ENCODE measurements at regions of chr17 and their contacts with region 1.

Region 1: GRCh38 chr17:73311781-73312641 is at the start of gene CDC42EP4:
- DNase-seq: peak; percentile 96 to 98 (median 97)
- H3K4me3 ChIP-seq: peak within 1 kb of the TSS; percentile 100
- H3K27ac ChIP-seq: peak within 1 kb of the TSS; percentile 94 to 95
- H3K4me1 ChIP-seq: peaks cover 5% of the 10 kb centered on the region
- H3K27me3 ChIP-seq: no peaks in the 10 kb centered on the region
- CTCF ChIP-seq: no peak
- EP300 ChIP-seq: no peak
- POLR2A ChIP-seq: peak; percentile 95
- total RNA-seq, gene CDC42EP4: 82.4 to 171 (median 120) TPM

Region 2: DNA sequence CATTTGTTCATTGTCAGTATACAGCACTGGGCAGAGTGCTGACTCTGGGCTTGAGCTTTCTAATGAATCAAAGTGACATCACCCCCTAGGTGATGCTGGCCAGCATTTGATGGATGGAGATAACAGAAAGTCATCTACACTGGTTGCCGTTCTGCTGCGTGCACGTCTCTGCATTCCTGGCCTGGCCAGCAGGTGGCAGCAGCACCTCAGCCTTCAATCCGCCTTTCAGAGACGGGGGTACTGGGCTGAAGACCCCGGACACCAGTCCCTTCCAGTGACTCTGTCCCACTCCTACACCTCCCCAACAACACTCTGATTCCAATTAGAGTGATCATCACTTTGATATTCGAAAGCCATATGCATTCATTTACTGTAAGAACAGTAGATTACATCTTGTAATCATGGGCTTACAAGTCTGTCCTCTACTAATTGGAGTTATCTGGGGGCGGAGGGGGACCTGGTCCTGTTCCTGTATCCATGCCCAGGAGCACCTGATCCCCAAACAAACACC is 56.3 kb before region 1 on chr17:
- intact Hi-C with region 1: loop called in 2 of 4 experiments (anchors 2 to 10 kb)
- DNase-seq: peak; percentile 37 to 77 (median 64)
- H3K4me3 ChIP-seq: no peak overlapping the region
- H3K27ac ChIP-seq: no peak overlapping the region
- H3K4me1 ChIP-seq: peaks cover 3% of the 10 kb centered on the region
- H3K27me3 ChIP-seq: no peaks in the 10 kb centered on the region
- CTCF ChIP-seq: peak; percentile 93 to 99 (median 97)
- EP300 ChIP-seq: no peak
- POLR2A ChIP-seq: no peak

Region 3: GRCh38 chr17:73261952-73262675 is 49.9 kb before region 1 on chr17:
- intact Hi-C with region 1: loop called in 2 of 4 experiments (anchors 2 to 10 kb)
- DNase-seq: peak in 3 of 5 donors; percentile 57 to 68 (median 59)
- H3K4me3 ChIP-seq: no peak overlapping the region
- H3K27ac ChIP-seq: peak overlapping the region in 1 of 2 donors; percentile 63
- H3K4me1 ChIP-seq: peaks cover 16% of the 10 kb centered on the region
- H3K27me3 ChIP-seq: no peaks in the 10 kb centered on the region
- CTCF ChIP-seq: no peak
- EP300 ChIP-seq: no peak
- POLR2A ChIP-seq: no peak

Region 4: DNA sequence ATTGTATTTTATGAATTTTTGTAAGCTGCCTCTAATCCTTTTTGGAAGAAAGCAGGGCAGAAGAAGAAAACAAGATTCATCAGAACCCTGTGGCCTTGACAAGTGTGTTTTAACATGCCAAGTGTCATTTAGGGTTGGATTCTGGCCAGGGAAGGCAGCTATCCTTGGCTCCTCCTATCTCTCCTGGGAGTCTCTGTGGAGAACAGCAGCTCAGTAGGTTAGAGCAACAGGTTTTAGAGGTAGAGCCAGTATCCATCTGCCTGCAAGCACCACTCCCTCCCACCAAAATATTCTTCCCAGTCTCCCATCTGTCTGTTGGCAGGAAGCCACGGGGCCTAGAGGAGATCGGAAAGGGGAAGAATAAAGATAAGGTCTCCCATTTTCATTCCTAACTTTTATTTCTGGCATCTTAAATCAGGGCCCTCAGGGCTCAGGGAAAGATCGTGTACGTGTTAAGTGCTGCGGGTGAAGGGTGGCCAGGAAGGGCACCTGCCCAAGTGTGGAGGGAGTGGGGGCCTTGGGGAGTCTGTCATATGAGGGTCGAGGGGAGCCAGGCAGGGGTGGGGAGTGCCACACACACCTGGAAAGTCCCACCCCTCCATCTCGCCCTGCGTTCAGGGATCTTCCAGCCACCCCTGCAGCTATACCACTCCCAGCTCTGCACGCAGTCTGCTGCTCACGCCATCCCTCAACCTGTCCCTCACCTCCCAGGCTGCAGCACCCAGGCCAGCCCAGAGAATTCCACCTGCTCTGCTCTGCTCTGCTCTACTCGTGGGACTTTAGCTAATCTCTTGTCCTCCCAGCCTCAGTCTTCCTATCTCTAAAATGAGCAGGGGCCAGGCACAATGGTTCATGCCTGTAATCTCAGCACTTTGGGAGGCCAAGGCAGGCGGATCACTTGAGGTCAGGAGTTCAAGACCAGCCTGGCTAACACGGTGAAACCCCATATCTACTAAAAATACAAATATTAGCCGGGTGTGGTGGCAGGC is 33.3 kb before region 1 on chr17:
- intact Hi-C with region 1: loop called in 1 of 4 experiments (anchors 2 kb)
- DNase-seq: peak; percentile 77 to 88 (median 83)
- H3K4me3 ChIP-seq: no peak overlapping the region
- H3K27ac ChIP-seq: peak overlapping the region; percentile 65 to 83
- H3K4me1 ChIP-seq: peaks cover 32% of the 10 kb centered on the region
- H3K27me3 ChIP-seq: no peaks in the 10 kb centered on the region
- CTCF ChIP-seq: no peak
- EP300 ChIP-seq: no peak
- POLR2A ChIP-seq: no peak

Region 5: DNA sequence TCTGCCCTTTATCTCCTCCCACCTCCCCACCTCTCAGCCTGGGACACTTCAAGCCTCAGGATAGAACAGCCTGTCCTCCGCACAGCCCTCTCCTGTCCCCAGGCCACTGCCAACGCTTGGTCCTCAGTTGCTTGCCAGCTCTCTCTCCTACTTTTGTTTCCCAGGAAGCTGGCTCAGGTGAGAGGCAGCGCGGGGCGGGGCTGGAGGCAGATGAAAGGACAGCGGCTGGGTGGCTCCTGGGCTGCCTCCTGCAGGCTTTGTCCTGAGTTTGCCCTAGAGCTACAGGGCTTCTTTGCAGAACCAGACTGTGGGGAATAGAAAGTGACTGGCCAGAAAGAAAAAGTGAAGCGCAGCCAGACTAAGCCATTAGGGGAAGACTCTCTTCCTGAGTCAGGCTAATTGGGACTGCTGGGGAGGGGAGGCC is 48.0 kb after region 1 on chr17:
- intact Hi-C with region 1: loop called in 2 of 4 experiments (anchors 5 to 10 kb)
- DNase-seq: no peak
- H3K4me3 ChIP-seq: no peak overlapping the region
- H3K27ac ChIP-seq: no peak overlapping the region
- H3K4me1 ChIP-seq: peaks cover 2% of the 10 kb centered on the region
- H3K27me3 ChIP-seq: no peaks in the 10 kb centered on the region
- CTCF ChIP-seq: no peak
- EP300 ChIP-seq: no peak
- POLR2A ChIP-seq: no peak

Region 6: GRCh38 chr17:73365906-73366623 is 54.1 kb after region 1 on chr17:
- intact Hi-C with region 1: loop called in 2 of 4 experiments (anchors 5 to 10 kb)
- DNase-seq: peak; percentile 40 to 64 (median 52)
- H3K4me3 ChIP-seq: no peak overlapping the region
- H3K27ac ChIP-seq: peak overlapping the region; percentile 50 to 64
- H3K4me1 ChIP-seq: peaks cover 18% of the 10 kb centered on the region
- H3K27me3 ChIP-seq: no peaks in the 10 kb centered on the region
- CTCF ChIP-seq: no peak
- EP300 ChIP-seq: no peak
- POLR2A ChIP-seq: no peak

Measured in ovary (tissue), 10 donors.